ENCODE measurements at regions of chr17 and their contacts with region 1.

Region 1: DNA sequence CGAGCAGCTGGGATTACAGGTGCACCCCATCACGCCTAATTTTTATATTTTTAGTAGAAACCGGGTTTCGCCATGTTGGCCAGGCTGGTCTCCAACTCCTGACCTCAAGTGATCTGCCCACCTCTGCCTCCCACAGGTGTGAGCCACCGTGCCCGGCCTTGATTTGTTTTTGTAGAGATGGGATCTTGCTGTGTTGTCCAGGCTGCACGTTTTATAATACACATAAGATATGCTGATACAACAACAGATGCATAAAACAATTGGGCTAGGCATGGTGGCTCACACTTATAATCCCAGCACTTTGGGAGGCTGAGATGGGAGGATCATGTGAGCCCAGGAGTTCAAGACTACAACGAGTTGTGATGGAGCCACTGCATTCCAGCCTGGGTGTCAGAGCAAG is 6.0 kb downstream of the USP36 start:
- DNase-seq: no peak
- H3K4me3 ChIP-seq: no peak overlapping the region
- H3K27ac ChIP-seq: no peak overlapping the region
- H3K4me1 ChIP-seq: peaks cover 0 to 7% (median 4%) of the 10 kb centered on the region in 4 experiments
- H3K27me3 ChIP-seq: no peaks in the 10 kb centered on the region
- CTCF ChIP-seq: no peak
- EP300 ChIP-seq: no peak
- POLR2A ChIP-seq: no peak
- RAD21 ChIP-seq: no peak

Region 2: GRCh38 chr17:78759203-78759968 is 75.2 kb before region 1 on chr17:
- CTCF ChIA-PET with region 1: no interaction called
- POLR2A ChIA-PET with region 1: no interaction called
- DNase-seq: no peak
- H3K4me3 ChIP-seq: no peak overlapping the region
- H3K27ac ChIP-seq: no peak overlapping the region
- H3K4me1 ChIP-seq: peaks cover 0 to 6% (median 3%) of the 10 kb centered on the region in 4 experiments; a peak in 4 of 7 replicates
- H3K27me3 ChIP-seq: no peaks in the 10 kb centered on the region
- CTCF ChIP-seq: no peak
- EP300 ChIP-seq: no peak
- POLR2A ChIP-seq: no peak
- RAD21 ChIP-seq: no peak

Region 3: GRCh38 chr17:78822552-78822951 is 12.0 kb before region 1 on chr17:
- CTCF ChIA-PET with region 1: interaction called, 14 read pairs
- POLR2A ChIA-PET with region 1: interaction called, 12 read pairs
- DNase-seq: no peak
- H3K4me3 ChIP-seq: no peak overlapping the region
- H3K27ac ChIP-seq: no peak overlapping the region
- H3K4me1 ChIP-seq: no peaks in the 10 kb centered on the region
- H3K27me3 ChIP-seq: no peaks in the 10 kb centered on the region
- CTCF ChIP-seq: no peak
- EP300 ChIP-seq: no peak
- POLR2A ChIP-seq: no peak
- RAD21 ChIP-seq: no peak

Measured in H1 (cell line).